ENCODE measurements at regions of chr4 and their contacts with region 1.

Region 1: GRCh38 chr4:102449751-102450352 is 51.3 kb upstream of the NFKB1 start:
- DNase-seq: peak; percentile 33 to 86
- H3K4me3 ChIP-seq: no peak overlapping the region
- H3K27ac ChIP-seq: no peak overlapping the region
- H3K4me1 ChIP-seq: no peaks in the 10 kb centered on the region
- H3K27me3 ChIP-seq: no peaks in the 10 kb centered on the region
- CTCF ChIP-seq: peak in 4 of 7 experiments; percentile 19 to 72 (median 66)
- EP300 ChIP-seq: no peak
- POLR2A ChIP-seq: no peak

Region 2: DNA sequence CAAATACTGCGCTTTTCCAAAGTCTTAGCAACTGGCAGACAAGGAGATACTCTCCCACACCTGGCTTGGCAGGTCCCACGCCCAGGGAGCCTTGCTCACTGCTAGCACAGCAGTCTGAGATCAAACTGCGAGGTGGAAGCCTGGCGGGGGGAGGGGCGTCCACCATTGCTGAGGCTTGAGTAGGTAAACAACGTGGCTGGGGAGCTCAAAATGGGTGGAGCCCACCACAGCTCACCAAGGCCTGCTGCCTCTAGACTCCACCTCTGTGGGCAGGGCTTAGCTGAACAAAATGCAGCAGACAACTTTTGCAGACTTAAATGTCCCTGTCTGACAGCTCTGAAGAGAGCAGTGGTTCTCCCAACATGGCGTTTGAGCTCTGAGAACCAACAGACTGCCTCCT is 28.3 kb after region 1 on chr4:
- intact Hi-C with region 1: no loop called
- DNase-seq: no peak
- H3K4me3 ChIP-seq: no peak overlapping the region
- H3K27ac ChIP-seq: no peak overlapping the region
- H3K4me1 ChIP-seq: no peaks in the 10 kb centered on the region
- H3K27me3 ChIP-seq: no peaks in the 10 kb centered on the region
- CTCF ChIP-seq: no peak
- EP300 ChIP-seq: no peak
- POLR2A ChIP-seq: no peak

Region 3: GRCh38 chr4:102620697-102621497 is 171.0 kb after region 1 on chr4:
- intact Hi-C with region 1: loop called (anchors 10 kb)
- DNase-seq: peak; percentile 58 to 88
- H3K4me3 ChIP-seq: peak overlapping the region; percentile 14 to 21 (median 18)
- H3K27ac ChIP-seq: peak overlapping the region; percentile 71 to 84 (median 79)
- H3K4me1 ChIP-seq: peaks cover 8 to 26% (median 13%) of the 10 kb centered on the region in 4 donors
- H3K27me3 ChIP-seq: no peaks in the 10 kb centered on the region
- CTCF ChIP-seq: peak in 4 of 7 experiments; percentile 11 to 70 (median 42)
- EP300 ChIP-seq: no peak
- POLR2A ChIP-seq: no peak

Region 4: DNA sequence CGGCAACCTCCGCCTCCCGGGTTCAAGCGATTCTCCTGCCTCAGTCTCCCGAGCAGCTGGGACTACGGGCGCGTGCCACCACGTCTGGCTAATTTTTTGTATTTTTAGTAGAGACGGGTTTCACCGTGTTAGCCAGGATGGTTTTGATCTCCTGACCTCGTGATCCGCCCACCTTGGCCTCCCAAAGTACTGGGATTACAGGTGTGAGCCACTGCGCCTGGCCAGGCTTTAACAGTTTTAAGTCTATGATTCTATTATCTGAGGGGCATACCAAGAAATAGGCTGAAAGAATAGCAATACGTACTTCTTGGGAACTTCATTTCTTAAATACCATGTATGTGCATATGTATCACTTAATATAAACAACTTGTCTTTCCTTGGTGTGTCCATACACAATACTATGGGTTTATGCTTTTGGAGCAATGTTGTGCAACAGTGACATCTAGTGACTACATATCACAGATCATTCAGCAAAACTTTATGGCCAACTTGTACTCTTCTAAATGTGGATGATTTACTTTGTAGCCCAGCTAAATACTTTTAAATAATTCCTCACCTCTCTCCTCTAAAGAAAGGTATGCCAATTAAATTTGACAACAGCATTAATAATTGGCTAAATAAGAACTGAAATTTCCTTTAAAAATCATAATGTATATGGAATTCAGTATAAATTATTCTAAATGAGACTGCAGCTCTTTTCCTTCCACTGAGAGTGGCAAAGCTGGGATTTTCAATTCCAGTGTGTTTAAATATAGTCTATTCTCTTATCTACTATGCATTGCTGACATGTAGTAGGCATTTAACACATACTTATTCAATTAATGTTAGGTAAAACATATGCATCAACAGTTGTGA is 559.2 kb after region 1 on chr4:
- intact Hi-C with region 1: loop called (anchors 10 kb)
- DNase-seq: peak in 1 of 2 donors; percentile 89
- H3K4me3 ChIP-seq: no peak overlapping the region
- H3K27ac ChIP-seq: no peak overlapping the region
- H3K4me1 ChIP-seq: peaks cover 8 to 24% (median 19%) of the 10 kb centered on the region in 4 donors
- H3K27me3 ChIP-seq: no peaks in the 10 kb centered on the region
- CTCF ChIP-seq: peak in 5 of 7 experiments; percentile 39 to 63 (median 55)
- EP300 ChIP-seq: no peak
- POLR2A ChIP-seq: no peak

Region 5: GRCh38 chr4:103099691-103100392 is 650.0 kb after region 1 on chr4 and contains the start of gene BDH2:
- intact Hi-C with region 1: loop called (anchors 10 kb)
- DNase-seq: peak; percentile 39 to 96
- H3K4me3 ChIP-seq: peak within 1 kb of the TSS; percentile 41 to 50 (median 44)
- H3K27ac ChIP-seq: peak within 1 kb of the TSS in 4 of 5 donors; percentile 63 to 80 (median 78)
- H3K4me1 ChIP-seq: peaks cover 18 to 41% (median 32%) of the 10 kb centered on the region in 4 donors
- H3K27me3 ChIP-seq: no peaks in the 10 kb centered on the region
- CTCF ChIP-seq: peak in 5 of 7 experiments; percentile 58 to 93 (median 81)
- EP300 ChIP-seq: no peak
- POLR2A ChIP-seq: no peak
- total RNA-seq, gene BDH2: 3.5 to 74.7 (median 41.4) TPM

Measured in stomach (tissue), 19 donors.